AG04449 (cell line): ENCODE measurements at regions of chr16 and their contacts with region 1.

Region 1: GRCh38 chr16:84952335-84953189 is 58.8 kb downstream of the ZDHHC7 start:
- DNase-seq: no peak
- H3K4me3 ChIP-seq: no peak overlapping the region
- CTCF ChIP-seq: peak; percentile 86

Region 2: DNA sequence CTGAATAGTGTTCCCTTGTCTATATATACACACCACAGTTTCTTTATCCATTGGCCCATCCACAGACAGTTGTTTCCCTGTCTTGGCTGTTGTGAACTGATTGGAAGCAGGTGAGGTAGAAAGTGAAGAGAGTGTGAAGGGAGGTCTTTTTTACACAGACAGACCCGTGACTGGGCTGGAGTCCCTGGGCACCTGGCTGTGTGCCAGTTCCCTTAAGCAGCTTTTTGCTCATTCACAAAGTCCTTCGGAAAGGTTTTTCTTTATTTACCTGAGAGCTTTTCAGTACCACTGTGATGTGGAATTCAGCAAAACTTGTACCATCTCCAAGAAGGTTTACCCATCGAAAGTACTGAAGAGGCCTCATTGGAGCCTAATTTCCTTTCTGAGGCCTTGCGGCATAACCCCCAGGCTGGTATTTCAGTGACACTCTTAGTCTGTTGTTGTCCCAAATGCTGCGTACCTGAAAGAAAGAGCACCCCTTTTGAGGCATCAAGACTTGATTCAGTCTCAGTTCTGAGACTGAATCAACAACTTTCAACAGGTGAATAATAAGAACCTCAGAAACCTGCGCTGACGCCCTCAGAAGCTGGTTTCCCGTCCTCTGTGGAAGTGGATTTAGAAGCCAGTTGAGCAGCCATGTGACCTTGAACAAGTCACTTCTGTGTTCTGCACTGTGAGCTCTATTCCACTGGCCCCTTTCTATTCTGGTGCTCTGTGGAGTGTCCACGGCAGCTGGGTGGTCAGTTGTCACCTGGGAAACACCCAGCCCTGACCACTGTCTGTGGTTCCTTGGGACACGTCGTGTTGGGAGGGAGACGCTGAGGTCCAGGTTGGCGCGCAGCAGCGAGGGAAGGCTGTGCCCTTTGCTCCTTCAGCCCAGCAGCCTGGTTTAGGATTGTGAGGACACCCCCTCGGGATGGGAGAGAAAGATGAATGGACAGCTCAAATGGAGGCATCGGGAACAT is 186.7 kb before region 1 on chr16:
- CTCF ChIA-PET with region 1: interaction called, 492 read pairs
- POLR2A ChIA-PET with region 1: no interaction called
- DNase-seq: no peak
- H3K4me3 ChIP-seq: no peak overlapping the region
- CTCF ChIP-seq: no peak

Region 3: DNA sequence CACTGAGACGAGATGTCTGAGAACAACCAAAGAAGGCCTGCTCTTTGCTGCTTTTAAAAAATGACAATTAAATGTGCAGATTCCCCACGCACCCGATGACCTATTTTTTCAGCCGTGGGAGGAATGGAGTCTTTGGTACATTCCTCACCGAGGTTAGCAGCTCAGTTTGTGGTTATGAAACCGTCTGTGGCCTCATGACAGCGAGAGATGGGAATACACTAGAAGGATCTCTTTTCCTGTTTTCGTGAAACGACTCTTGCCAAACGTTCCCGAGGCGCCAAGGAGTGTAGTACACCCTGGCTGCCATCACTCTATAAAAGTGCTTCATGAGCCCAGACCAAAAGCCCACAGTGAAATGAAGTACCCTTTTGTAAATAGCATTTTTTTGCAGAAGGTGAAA is 45.0 kb before region 1 on chr16:
- CTCF ChIA-PET with region 1: no interaction called
- POLR2A ChIA-PET with region 1: no interaction called
- DNase-seq: peak; percentile 19
- H3K4me3 ChIP-seq: no peak overlapping the region
- CTCF ChIP-seq: no peak

Region 4: DNA sequence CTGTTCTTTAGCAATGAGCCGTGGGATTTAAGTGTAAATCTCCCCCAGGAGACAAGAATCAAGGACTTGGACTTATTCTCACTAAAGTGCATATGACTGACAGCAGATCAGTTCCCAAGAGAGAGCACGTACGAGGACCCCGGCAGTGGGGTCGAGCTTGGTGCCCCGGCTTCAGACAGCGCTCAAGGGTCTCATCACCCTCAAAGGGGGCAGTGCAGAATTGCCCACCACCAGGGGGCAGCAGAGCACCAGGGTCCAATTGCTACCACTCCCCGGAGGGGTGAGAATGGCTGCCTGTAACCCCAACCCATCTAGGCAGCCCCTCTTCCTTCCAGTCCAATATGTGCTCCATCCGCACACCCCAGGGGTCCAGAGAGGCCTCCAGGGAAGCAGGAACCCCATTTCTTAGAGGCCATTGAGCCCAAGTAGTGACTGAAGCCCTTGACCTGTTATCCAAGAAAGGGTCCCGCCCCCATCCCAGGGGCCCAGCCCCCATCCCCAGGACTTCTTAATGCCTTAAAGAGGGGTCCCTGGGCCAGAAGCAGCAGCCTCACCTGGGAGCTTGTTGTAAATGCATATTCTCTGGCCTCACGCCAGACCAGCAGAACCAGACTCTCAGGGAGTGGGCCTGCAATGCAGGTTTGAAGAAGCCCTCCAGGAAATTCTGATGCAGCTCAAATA is 27.3 kb before region 1 on chr16:
- CTCF ChIA-PET with region 1: interaction called, 19 read pairs
- POLR2A ChIA-PET with region 1: no interaction called
- DNase-seq: no peak
- H3K4me3 ChIP-seq: no peak overlapping the region
- CTCF ChIP-seq: peak; percentile 72

Region 5: DNA sequence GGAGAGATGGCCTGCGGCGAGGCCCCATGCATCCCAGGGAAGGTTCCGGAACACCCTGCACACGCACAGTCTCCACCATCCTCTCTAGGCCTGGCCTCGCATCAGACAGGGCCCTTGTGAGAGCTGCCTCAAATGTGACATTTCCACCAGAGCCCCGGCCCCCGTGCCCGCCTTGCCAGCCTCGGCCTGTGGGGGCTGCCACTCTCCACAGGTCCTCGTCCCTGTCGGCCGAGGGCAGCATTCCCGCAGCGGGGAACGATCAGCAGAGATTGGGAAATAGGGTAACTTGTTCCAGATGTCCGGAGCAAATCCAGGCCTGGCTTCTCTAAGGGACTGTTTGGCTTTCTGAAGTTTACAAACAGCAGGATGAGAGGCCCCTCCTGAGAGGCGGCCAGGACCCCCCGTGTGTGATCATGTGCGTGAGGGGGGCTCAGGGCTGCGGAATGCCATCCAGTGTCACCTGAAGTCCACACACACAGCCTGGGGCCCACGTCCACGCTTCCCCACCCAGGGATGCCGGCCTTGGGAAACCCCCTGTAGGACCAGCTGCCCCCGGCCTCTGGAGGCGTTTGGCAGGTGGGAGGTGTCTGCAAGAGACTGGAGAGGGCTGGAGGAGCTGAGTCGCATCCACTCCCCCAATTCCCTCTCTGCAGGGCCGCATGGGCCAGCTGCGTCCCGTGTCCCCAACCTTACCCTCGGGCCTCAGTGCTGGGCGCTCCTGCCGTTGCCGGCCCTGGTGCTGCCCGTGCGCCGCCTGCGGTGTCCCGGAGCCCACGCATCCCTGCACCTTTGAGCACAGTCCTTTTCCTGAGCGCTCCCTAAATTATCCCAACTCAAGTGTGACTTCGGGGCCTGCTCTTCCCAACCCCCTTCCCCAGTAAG is 11.7 kb before region 1 on chr16:
- CTCF ChIA-PET with region 1: interaction called, 53 read pairs
- POLR2A ChIA-PET with region 1: no interaction called
- DNase-seq: no peak
- H3K4me3 ChIP-seq: no peak overlapping the region
- CTCF ChIP-seq: no peak

Region 6: DNA sequence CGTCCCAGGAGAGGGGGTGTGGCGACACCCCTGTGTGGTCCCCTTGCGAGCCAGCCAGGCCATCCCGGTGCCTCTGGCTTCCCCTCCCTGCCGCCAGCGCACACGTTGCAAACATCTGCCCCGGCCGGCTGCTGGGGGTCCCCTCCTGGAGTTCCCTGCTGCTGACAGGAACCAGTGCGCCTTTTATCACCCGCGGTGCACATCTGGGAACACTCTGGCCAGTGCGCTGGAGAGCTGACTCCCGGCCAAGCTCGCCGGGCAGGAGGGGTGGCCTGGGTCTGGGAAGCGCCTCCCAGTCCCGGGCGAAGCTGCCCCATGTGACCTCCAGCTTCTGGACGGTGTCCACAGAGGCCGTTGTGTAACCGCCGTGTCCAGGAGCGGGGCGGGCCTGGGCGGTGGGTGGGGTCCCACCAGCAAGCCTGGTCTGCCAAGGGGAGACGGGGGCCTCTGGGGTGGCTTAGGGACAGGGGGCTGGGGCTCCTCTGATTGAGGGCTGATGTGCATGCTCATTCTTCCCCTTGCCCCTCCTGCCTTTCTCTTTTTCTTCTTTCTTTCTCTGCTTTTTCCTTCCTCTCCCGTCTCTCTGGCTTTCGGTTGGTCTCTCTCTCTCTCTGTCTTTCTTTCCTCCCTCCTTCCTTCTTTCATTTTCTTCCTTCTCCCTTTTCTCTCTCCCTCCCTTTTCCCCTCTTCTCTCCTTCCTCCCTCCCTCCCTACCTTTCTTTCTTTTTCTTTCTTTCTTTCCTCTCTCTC is 184.9 kb after region 1 on chr16:
- CTCF ChIA-PET with region 1: no interaction called
- POLR2A ChIA-PET with region 1: no interaction called
- DNase-seq: no peak
- H3K4me3 ChIP-seq: peak overlapping the region; percentile 20
- CTCF ChIP-seq: no peak

Region 7: DNA sequence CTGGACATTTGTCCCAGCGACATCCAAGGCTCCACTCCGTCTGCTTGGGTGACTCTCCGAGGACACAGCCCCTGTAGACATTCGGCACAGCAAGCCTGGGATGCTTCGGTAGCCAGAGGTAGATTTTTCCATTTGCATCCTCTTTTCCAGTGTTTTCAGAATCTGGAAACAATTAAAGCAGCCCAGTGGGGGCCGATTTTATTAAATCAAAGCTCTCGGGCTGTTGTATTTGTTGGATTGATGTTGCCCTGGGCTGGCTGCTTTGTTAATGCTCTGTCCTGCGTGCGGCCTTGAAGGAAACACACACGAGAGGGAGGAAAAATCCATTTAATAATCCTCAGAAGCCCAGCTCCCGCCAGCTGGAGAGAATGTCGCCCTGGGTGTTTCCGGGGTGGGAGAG is 317.8 kb after region 1 on chr16:
- CTCF ChIA-PET with region 1: no interaction called
- POLR2A ChIA-PET with region 1: no interaction called
- DNase-seq: no peak
- H3K4me3 ChIP-seq: no peak overlapping the region
- CTCF ChIP-seq: no peak